ENCODE measurements at regions of chr16 and their contacts with region 1.

Region 1: GRCh38 chr16:30844671-30845449 is 49.0 kb downstream of the BCL7C start:
- DNase-seq: peak; percentile 89
- ATAC-seq: peak; percentile 95
- H3K4me3 Mint-ChIP-seq: peak overlapping the region; percentile 45
- H3K27ac Mint-ChIP-seq: peak overlapping the region; percentile 80
- H3K4me1 Mint-ChIP-seq: peaks cover 12% of the 10 kb centered on the region
- H3K27me3 Mint-ChIP-seq: peaks cover 2% of the 10 kb centered on the region

Region 2: DNA sequence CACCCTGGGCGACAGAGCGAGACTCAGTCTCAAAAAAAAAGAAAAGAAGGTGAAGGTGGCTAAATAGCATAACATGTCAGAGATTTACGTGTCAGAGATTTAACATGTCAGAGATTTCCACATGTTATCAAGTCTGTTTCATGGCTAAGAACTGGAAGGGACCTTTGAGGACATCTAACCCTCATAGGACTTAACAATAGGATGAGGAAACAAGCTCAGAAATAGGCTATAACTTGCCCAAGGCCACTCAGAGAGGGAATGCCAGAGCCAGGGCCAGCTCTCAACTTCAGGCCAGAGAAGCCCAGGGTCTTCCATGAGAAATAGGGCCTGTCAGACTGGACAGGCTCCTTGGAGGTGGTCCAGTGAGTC is 31.1 kb before region 1 on chr16:
- CTCF ChIA-PET with region 1: interaction called, 25 read pairs
- DNase-seq: no peak
- ATAC-seq: no peak
- H3K4me3 Mint-ChIP-seq: peak overlapping the region; percentile 94
- H3K27ac Mint-ChIP-seq: peak overlapping the region; percentile 88
- H3K4me1 Mint-ChIP-seq: peaks cover 12% of the 10 kb centered on the region
- H3K27me3 Mint-ChIP-seq: peaks cover 2% of the 10 kb centered on the region

Region 3: DNA sequence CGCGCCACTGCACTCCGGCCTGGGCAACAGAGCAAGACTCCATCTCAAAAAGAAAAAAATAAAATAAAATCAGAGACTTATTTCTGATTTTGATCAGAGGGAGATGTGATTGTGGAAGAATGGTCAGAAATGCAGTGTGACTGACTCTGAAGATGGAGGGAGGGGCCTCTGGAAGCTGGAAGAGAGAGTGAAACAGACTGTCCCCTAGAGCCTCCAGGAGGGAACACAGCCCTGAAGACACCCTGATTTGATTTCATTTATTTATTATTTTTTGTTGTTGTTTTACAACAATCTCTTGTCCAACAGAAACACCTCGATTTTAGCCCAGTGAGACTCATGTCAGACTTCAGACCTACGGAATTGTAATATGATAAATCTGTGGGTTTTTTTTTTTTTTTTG is 22.9 kb after region 1 on chr16:
- CTCF ChIA-PET with region 1: interaction called, 44 read pairs
- DNase-seq: no peak
- ATAC-seq: no peak
- H3K4me3 Mint-ChIP-seq: no peak overlapping the region
- H3K27ac Mint-ChIP-seq: no peak overlapping the region
- H3K4me1 Mint-ChIP-seq: peaks cover 7% of the 10 kb centered on the region
- H3K27me3 Mint-ChIP-seq: no peaks in the 10 kb centered on the region

Region 4: DNA sequence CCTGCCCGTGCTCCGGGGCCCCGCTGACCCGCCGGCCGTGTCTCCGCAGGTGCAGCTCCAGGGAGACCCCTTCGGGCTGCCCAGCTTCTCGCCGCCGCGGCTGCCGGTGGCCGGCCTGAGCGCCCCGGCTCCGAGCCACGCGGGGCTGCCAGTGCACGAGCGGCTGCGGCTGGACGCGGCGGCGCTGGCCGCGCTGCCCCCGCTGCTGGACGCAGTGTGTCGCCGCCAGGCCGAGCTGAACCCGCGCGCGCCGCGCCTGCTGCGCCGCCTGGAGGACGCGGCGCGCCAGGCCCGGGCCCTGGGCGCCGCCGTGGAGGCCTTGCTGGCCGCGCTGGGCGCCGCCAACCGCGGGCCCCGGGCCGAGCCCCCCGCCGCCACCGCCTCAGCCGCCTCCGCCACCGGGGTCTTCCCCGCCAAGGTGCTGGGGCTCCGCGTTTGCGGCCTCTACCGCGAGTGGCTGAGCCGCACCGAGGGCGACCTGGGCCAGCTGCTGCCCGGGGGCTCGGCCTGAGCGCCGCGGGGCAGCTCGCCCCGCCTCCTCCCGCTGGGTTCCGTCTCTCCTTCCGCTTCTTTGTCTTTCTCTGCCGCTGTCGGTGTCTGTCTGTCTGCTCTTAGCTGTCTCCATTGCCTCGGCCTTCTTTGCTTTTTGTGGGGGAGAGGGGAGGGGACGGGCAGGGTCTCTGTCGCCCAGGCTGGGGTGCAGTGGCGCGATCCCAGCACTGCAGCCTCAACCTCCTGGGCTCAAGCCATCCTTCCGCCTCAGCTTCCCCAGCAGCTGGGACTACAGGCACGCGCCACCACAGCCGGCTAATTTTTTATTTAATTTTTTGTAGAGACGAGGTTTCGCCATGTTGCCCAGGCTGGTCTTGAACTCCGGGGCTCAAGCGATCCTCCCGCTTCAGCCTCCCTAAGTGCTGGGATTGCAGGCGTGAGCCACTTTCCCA is 57.4 kb after region 1 on chr16:
- CTCF ChIA-PET with region 1: interaction called, 133 read pairs
- DNase-seq: peak; percentile 66
- ATAC-seq: peak; percentile 88
- H3K4me3 Mint-ChIP-seq: peak overlapping the region; percentile 81
- H3K27ac Mint-ChIP-seq: peak overlapping the region; percentile 99
- H3K4me1 Mint-ChIP-seq: peaks cover 34% of the 10 kb centered on the region
- H3K27me3 Mint-ChIP-seq: no peaks in the 10 kb centered on the region

Region 5: DNA sequence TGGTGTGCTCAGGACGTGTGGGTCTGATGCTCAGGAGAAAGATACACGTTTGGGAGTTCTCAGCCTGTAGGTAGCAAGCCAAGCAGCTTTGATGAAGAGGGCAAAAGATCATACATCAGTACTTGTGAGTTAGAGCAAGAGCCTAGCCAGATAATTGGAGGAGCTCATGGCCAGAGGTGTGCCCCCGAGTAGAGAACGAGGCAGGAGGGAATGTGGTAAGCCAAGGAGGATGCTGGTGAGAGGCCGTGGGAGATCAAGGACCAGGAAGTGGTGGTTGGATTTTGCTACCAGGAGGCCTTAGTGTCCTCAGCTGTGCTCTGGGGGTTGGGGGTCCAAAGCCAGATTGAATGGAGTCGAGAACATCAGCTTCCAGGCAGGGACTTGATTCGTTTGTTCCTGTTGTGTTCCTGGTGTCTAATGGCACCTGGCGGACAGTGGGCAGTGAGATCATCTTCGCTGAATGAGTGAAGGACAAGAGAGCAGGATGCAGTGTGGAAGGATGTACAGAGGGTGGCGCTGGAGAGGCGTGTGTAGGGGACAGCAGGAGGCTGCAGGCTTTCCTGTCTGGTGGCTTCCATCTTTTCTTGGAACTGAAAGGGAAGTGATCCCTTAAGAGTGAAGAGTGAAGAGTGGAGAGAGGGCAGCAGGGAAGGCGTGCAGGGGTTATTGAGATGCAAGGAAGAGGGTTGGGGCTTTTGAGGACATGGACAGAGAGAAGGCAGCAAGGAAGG is 90.1 kb after region 1 on chr16:
- CTCF ChIA-PET with region 1: interaction called, 68 read pairs
- DNase-seq: peak; percentile 68
- ATAC-seq: peak; percentile 59
- H3K4me3 Mint-ChIP-seq: no peak overlapping the region
- H3K27ac Mint-ChIP-seq: no peak overlapping the region
- H3K4me1 Mint-ChIP-seq: peaks cover 26% of the 10 kb centered on the region
- H3K27me3 Mint-ChIP-seq: no peaks in the 10 kb centered on the region

Measured in activated CD8-positive, alpha-beta memory T cell treated with anti-CD3 and anti-CD28 coated beads, Interleukin-2, amount 10 ng/mL, durations not matched to agents 7 days and 5 days (primary cell).